HepG2 (cell line): ENCODE measurements at regions of chr12 and their contacts with region 1.

Region 1: DNA sequence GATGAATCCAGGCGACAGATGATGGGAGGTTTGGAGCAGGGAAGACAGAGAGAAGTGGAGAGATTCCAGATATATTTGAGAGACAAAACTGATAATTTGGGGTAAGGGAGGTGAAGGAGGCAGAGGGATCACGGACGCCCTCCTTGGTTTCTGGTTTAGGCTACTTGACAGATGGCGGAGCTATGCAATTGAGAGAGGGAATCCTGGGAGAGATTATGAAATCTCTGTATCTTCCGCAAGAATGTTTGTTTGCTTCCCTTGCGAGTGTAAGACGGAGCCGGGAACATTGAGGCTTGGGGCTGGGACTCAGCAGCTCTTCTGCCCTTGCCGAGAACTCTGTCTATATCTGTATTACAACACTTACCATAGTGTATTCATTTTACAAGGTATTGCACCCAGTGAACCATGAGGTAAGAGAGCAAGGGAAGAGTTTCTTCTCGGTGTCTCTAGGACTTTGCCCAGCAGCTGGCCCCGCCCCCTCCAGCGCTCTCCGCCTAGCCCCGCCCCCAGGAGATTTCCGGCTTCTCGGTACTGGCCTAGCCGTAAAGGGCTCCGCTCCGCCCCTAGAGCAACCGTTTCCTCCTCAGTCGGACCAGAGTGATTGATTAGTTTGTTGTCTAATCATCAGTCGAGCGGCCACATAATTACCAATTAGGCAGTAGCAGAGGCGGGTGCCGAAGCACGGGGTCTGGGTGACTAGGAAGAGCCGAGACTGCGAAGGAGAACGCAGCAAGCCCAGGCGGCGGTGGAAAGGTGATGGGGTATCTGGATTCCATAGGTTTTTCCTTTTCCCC is at the start of gene PRR13:
- DNase-seq: peak; percentile 98
- ATAC-seq: peak; percentile 97
- H3K4me3 ChIP-seq: peak within 1 kb of the TSS; percentile 71 to 78 (median 77)
- H3K27ac ChIP-seq: peak within 1 kb of the TSS; percentile 90
- H3K4me1 ChIP-seq: peaks cover 50% of the 10 kb centered on the region
- H3K27me3 ChIP-seq: no peaks in the 10 kb centered on the region; a peak in 1 of 5 replicates
- CTCF ChIP-seq: no peak
- EP300 ChIP-seq: 0 out of 4 replicates have a peak, but pooled peaks of 1 of the 2 experiments have one; percentile 10
- POLR2A ChIP-seq: peak; percentile 90 to 91
- RAD21 ChIP-seq: 0 out of 2 replicates have a peak, but pooled peaks have one; percentile 8
- total RNA-seq, gene PRR13: 102 and 109 TPM in 2 replicates

Region 2: GRCh38 chr12:53427905-53428594 is 13.2 kb before region 1 on chr12:
- CTCF ChIA-PET with region 1: no interaction called
- POLR2A ChIA-PET with region 1: interaction called, 16 read pairs
- in situ Hi-C with region 1: no loop called
- intact Hi-C with region 1: no loop called
- DNase-seq: no peak
- ATAC-seq: no peak
- H3K4me3 ChIP-seq: no peak overlapping the region
- H3K27ac ChIP-seq: no peak overlapping the region
- H3K4me1 ChIP-seq: peaks cover 51% of the 10 kb centered on the region
- H3K27me3 ChIP-seq: 0 out of 5 replicates have a peak, but pooled peaks cover 0 to 4% of the 10 kb centered on the region in 2 experiments
- CTCF ChIP-seq: no peak
- EP300 ChIP-seq: no peak
- POLR2A ChIP-seq: no peak
- RAD21 ChIP-seq: no peak

Region 3: GRCh38 chr12:53451661-53452158 is 10.5 kb after region 1 on chr12 and contains the start of gene PCBP2:
- CTCF ChIA-PET with region 1: no interaction called
- POLR2A ChIA-PET with region 1: interaction called, 16 read pairs
- in situ Hi-C with region 1: no loop called
- intact Hi-C with region 1: no loop called
- DNase-seq: peak; percentile 98
- ATAC-seq: peak; percentile 95
- H3K4me3 ChIP-seq: peak within 1 kb of the TSS; percentile 77 to 97 (median 95)
- H3K27ac ChIP-seq: peak within 1 kb of the TSS; percentile 92
- H3K4me1 ChIP-seq: peaks cover 34% of the 10 kb centered on the region
- H3K27me3 ChIP-seq: no peaks in the 10 kb centered on the region
- CTCF ChIP-seq: peak; percentile 97
- EP300 ChIP-seq: peak; percentile 31 to 42; a peak in 1 of 4 replicates
- POLR2A ChIP-seq: peak; percentile 87 to 91
- RAD21 ChIP-seq: peak; percentile 59
- total RNA-seq, gene PCBP2: 154 and 265 TPM in 2 replicates